Sigmoid colon (tissue), 7 donors: ENCODE measurements at regions of chr16 and their contacts with region 1.

Region 1: DNA sequence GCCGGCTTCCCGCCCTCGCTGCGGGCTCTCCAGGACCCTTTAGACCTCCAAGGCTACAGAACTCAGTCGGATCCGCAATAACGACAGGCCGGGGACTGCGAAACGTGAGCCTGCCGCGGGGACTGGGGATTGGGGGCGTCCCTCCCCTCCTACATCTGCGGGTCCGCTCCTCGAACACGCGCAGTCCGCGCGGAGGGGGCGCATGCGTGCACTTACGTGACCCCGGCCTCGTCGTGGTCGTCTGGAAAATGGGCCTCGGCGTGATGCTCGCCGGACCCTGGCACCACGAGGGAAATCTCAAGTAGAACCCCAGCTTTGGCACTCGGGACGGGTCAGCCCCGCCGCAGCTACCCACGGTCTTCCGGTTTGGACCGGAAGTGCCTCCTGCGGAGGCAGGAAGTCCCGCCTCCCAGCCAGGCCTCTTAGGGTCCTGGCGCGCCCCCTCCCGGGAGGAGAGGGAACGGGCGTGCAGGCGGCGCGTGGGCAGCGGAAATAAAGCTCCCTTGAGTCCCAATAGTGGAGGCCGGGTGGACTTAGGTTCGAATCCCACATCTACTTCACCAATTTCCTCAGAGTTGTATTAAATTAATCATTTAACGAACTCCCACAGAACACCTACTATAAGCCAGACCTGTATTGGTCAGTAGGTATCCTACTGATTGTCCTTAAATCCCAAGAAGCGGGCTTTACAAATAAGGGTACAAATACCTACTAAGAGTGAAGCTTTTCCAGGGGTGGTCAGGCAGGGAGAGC is at the start of gene TAF1C:
- DNase-seq: peak; percentile 96
- H3K4me3 ChIP-seq: peak within 1 kb of the TSS; percentile 75 to 99 (median 88)
- H3K27ac ChIP-seq: peak within 1 kb of the TSS; percentile 72 to 87 (median 76)
- H3K4me1 ChIP-seq: peaks cover 0 to 23% (median 12%) of the 10 kb centered on the region in 4 donors
- H3K27me3 ChIP-seq: no peaks in the 10 kb centered on the region
- CTCF ChIP-seq: peak; percentile 72 to 98 (median 86)
- EP300 ChIP-seq: no peak
- POLR2A ChIP-seq: peak in 1 of 2 donors; percentile 45
- total RNA-seq, gene TAF1C: 19.6 to 49.0 (median 30.0) TPM

Region 2: GRCh38 chr16:83952940-83953795 is 233.7 kb before region 1 on chr16 and contains the start of gene OSGIN1:
- intact Hi-C with region 1: loop called (anchors 5 kb)
- DNase-seq: peak; percentile 98
- H3K4me3 ChIP-seq: peak within 1 kb of the TSS; percentile 36 to 62 (median 57)
- H3K27ac ChIP-seq: peak within 1 kb of the TSS; percentile 89 to 93 (median 91)
- H3K4me1 ChIP-seq: peaks cover 0 to 37% (median 29%) of the 10 kb centered on the region in 4 donors
- H3K27me3 ChIP-seq: no peaks in the 10 kb centered on the region
- CTCF ChIP-seq: no peak
- EP300 ChIP-seq: peak in 3 of 4 donors; percentile 40 to 78 (median 63)
- POLR2A ChIP-seq: peak; percentile 77 to 90
- total RNA-seq, gene OSGIN1: 3.6 to 5.4 (median 4.3) TPM

Region 3: DNA sequence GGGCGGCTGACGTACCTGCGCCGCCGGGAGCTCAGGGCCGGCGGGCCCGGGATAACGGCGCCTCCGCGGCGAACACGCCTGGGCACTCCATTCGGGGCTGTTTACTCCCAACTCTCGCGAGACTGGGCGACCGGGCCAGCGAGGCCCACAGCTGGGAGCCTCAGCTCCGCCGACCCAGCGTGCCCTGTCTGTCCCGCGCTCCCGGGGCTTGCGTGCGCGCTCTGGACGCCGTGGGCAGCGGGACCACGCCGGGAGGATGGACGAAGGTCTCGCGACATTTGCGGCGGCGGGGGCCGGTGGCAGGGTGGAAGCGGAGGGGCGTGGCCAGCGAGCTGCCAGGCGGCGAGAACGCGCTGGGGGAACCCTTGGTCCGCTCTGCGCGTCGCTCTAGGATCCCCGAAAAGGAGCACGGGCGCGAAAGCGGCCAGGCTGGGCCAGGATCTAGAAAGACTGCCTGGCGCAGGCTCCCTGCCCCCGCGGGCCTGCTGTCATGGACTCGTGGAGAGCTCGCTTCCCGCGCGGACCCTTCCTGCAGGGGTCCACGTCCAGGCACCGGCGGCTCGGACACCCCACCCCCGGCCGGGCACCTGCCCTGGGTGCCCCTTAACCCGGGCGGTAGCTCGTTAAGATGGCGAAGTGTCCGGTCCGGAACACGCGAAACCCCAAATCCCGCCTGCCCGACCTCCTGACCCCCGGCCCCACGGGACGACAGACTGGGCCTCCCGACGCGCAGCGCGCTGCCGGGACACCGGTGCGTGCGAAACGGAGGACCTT is 70.0 kb before region 1 on chr16 and contains the start of gene MBTPS1:
- intact Hi-C with region 1: loop called (anchors 2 kb)
- DNase-seq: peak; percentile 99
- H3K4me3 ChIP-seq: peak within 1 kb of the TSS; percentile 83 to 99 (median 86)
- H3K27ac ChIP-seq: peak within 1 kb of the TSS; percentile 90 to 95 (median 94)
- H3K4me1 ChIP-seq: peaks cover 0 to 27% (median 22%) of the 10 kb centered on the region in 4 donors
- H3K27me3 ChIP-seq: no peaks in the 10 kb centered on the region
- CTCF ChIP-seq: no peak
- EP300 ChIP-seq: no peak
- POLR2A ChIP-seq: peak; percentile 72
- total RNA-seq, gene MBTPS1: 69.3 to 83.6 (median 79.3) TPM

Region 4: GRCh38 chr16:84308120-84308519 is 121.3 kb after region 1 on chr16:
- intact Hi-C with region 1: loop called (anchors 5 kb)
- DNase-seq: peak; percentile 87
- H3K4me3 ChIP-seq: no peak overlapping the region
- H3K27ac ChIP-seq: peak overlapping the region in 3 of 4 donors; percentile 15 to 94 (median 55)
- H3K4me1 ChIP-seq: peaks cover 0 to 52% (median 43%) of the 10 kb centered on the region in 4 donors
- H3K27me3 ChIP-seq: no peaks in the 10 kb centered on the region
- CTCF ChIP-seq: peak in 3 of 4 experiments; percentile 60 to 76 (median 68)
- EP300 ChIP-seq: no peak
- POLR2A ChIP-seq: no peak

Region 5: GRCh38 chr16:84617791-84618580 is 431.1 kb after region 1 on chr16 and contains the start of gene COTL1:
- intact Hi-C with region 1: loop called (anchors 10 kb)
- DNase-seq: peak; percentile 99
- H3K4me3 ChIP-seq: peak within 1 kb of the TSS; percentile 70 to 90 (median 84)
- H3K27ac ChIP-seq: peak within 1 kb of the TSS; percentile 78 to 90 (median 84)
- H3K4me1 ChIP-seq: peaks cover 0 to 61% (median 48%) of the 10 kb centered on the region in 4 donors
- H3K27me3 ChIP-seq: no peaks in the 10 kb centered on the region
- CTCF ChIP-seq: no peak
- EP300 ChIP-seq: no peak
- POLR2A ChIP-seq: no peak
- total RNA-seq, gene COTL1: 34.6 to 48.6 (median 37.8) TPM